ENCODE measurements at regions of chr10 and their contacts with region 1.

Region 1: GRCh38 chr10:131900350-131901146 is at the start of gene PPP2R2D:
- DNase-seq: peak; percentile 95
- ATAC-seq: peak; percentile 84
- H3K4me3 Mint-ChIP-seq: peak within 1 kb of the TSS; percentile 92
- H3K27ac Mint-ChIP-seq: peak within 1 kb of the TSS; percentile 90
- H3K4me1 Mint-ChIP-seq: peaks cover 58% of the 10 kb centered on the region
- H3K27me3 Mint-ChIP-seq: peaks cover 6% of the 10 kb centered on the region
- CTCF ChIP-seq: no peak
- total RNA-seq, gene PPP2R2D: 31.6 to 32.3 TPM

Region 2: GRCh38 chr10:131848741-131849590 is 51.6 kb before region 1 on chr10:
- CTCF ChIA-PET with region 1: no interaction called
- POLR2A ChIA-PET with region 1: no interaction called
- intact Hi-C with region 1: no loop called
- DNase-seq: no peak
- ATAC-seq: no peak
- H3K4me3 Mint-ChIP-seq: no peak overlapping the region
- H3K27ac Mint-ChIP-seq: no peak overlapping the region
- H3K4me1 Mint-ChIP-seq: no peaks in the 10 kb centered on the region
- H3K27me3 Mint-ChIP-seq: no peaks in the 10 kb centered on the region
- CTCF ChIP-seq: no peak

Region 3: GRCh38 chr10:131920151-131920550 is 19.6 kb after region 1 on chr10:
- CTCF ChIA-PET with region 1: no interaction called
- POLR2A ChIA-PET with region 1: no interaction called
- intact Hi-C with region 1: no loop called
- DNase-seq: peak; percentile 54
- ATAC-seq: no peak
- H3K4me3 Mint-ChIP-seq: no peak overlapping the region
- H3K27ac Mint-ChIP-seq: peak overlapping the region; percentile 78
- H3K4me1 Mint-ChIP-seq: peaks cover 69% of the 10 kb centered on the region
- H3K27me3 Mint-ChIP-seq: no peaks in the 10 kb centered on the region
- CTCF ChIP-seq: no peak

Region 4: DNA sequence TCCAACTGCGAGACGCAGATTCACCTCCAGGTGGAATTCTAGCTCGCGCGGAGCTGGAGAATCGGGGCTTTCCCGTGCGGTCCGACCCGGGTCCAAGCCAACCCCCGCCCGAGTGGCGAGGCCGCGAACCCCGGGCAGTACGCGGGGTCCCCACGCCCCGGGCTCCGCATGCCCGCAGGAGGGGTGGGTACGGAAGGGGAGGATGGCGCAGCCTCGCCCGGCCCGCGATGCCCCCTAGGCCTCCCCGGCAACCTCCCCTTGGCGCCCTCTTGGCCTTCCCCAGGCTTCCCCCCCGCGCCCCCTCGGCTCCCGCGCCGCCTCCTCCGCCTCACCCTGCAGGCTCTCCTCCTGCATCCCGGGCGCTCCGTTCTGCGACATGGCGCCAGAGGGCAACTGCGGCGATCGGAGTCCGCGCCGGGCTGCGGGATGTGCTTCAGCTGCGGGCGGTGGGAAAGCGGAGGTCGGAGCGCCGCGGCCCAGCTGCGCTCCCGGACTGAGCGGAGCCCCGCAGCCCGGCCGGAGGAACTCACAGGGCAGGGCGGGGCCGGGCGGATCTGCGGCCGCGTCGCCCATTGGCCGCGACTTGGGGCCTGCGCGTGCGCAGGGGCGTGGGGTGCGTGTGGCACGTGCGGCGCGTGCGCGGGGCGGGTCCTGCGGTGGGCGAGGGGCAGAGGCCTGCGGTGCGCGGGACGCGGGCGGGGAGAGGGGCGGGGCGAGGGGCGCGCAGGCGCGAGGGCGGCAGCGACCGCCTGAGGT is 81.1 kb after region 1 on chr10 and contains the start of gene BNIP3:
- CTCF ChIA-PET with region 1: interaction called, 5 read pairs
- POLR2A ChIA-PET with region 1: interaction called, 5 read pairs
- intact Hi-C with region 1: loop called (anchors 5 kb)
- DNase-seq: peak; percentile 88
- ATAC-seq: peak; percentile 91
- H3K4me3 Mint-ChIP-seq: peak within 1 kb of the TSS; percentile 91
- H3K27ac Mint-ChIP-seq: peak within 1 kb of the TSS; percentile 85
- H3K4me1 Mint-ChIP-seq: peaks cover 36% of the 10 kb centered on the region
- H3K27me3 Mint-ChIP-seq: no peaks in the 10 kb centered on the region
- CTCF ChIP-seq: no peak
- total RNA-seq, gene BNIP3: 207 to 216 TPM